Motor neuron (in vitro differentiated cells): ENCODE measurements at regions of chr16 and their contacts with region 1.

Region 1: GRCh38 chr16:84084570-84085270 is 32.0 kb downstream of the MBTPS1 start:
- ATAC-seq: peak; percentile 69 to 93 (median 79)
- H3K4me3 ChIP-seq: no peak overlapping the region
- H3K27ac ChIP-seq: no peak overlapping the region
- H3K4me1 ChIP-seq: no peaks in the 10 kb centered on the region

Region 2: DNA sequence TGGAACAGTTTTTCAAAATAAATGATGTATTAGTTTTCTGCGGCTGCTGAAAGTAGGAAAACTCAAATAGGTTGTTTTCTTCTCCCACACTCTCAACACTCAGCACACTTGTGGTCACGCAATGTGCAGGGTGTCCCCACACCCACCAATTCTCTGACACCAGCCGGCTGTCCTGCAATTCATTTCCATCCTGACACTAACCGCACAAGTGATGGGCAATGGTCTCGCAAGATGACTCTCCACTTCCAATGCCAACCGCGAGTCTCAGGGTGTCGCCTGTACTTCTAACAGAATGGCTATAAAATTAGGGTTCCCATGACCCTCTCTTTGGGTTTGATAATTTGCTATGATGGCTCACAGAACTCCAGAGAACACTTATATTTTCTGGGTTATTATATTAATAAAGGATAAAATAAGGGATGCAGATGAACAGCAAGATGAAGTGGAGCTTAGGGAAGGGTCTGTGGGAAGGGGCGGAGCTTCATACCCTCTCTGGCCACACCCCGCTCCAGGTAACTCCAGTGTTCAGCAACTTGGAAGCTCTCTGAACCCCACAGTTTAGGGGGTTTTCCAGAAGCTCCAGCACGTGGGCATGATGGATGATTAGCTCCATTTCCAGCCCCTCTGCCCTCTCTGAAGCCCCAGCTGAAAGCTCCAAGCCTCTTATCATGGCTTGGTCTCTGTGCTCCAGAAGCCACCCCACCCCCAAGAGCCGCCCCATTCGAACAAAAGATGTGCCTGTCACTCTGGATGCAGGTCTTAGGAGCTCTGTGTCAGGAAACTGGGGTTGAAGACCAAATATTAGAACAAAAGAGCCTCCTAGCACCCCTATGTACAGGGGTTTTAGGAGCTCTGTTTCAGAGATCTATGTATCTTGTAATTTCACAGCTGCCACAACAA is 82.3 kb after region 1 on chr16:
- in situ Hi-C with region 1: loop called in 1 of 9 experiments (anchors 10 kb)
- ATAC-seq: no peak
- H3K4me3 ChIP-seq: no peak overlapping the region
- H3K27ac ChIP-seq: no peak overlapping the region
- H3K4me1 ChIP-seq: no peaks in the 10 kb centered on the region